Mucosa of descending colon (tissue), 3 donors: ENCODE measurements at regions of chr3 and their contacts with region 1.

Region 1: GRCh38 chr3:195438371-195438770 is 4.4 kb downstream of the ACAP2 start:
- DNase-seq: no peak
- ATAC-seq: no peak
- H3K4me3 ChIP-seq: no peak overlapping the region
- H3K4me1 ChIP-seq: peaks cover 16% of the 10 kb centered on the region
- CTCF ChIP-seq: no peak

Region 2: GRCh38 chr3:195286115-195286872 is 152.1 kb before region 1 on chr3:
- intact Hi-C with region 1: loop called in 1 of 2 experiments (anchors 10 kb)
- DNase-seq: peak in 1 of 3 donors; percentile 23
- ATAC-seq: peak; percentile 82
- H3K4me3 ChIP-seq: no peak overlapping the region
- H3K4me1 ChIP-seq: peaks cover 16% of the 10 kb centered on the region
- CTCF ChIP-seq: no peak